ENCODE measurements at regions of chr20 and their contacts with region 1.

Region 1: GRCh38 chr20:62523473-62524203 is 47.8 kb upstream of the GATA5 start:
- DNase-seq: peak; percentile 52
- ATAC-seq: peak; percentile 88
- H3K4me3 Mint-ChIP-seq: peak overlapping the region; percentile 12; the same call in 1 of the 2 replicates
- H3K27ac Mint-ChIP-seq: no peak overlapping the region
- H3K4me1 Mint-ChIP-seq: peaks cover 11% of the 10 kb centered on the region
- H3K27me3 Mint-ChIP-seq: no peaks in the 10 kb centered on the region
- CTCF ChIP-seq: no peak

Region 2: GRCh38 chr20:62536871-62537401 is 13.3 kb after region 1 on chr20:
- CTCF ChIA-PET with region 1: interaction called, 12 read pairs
- POLR2A ChIA-PET with region 1: no interaction called
- DNase-seq: no peak
- ATAC-seq: no peak
- H3K4me3 Mint-ChIP-seq: no peak overlapping the region
- H3K27ac Mint-ChIP-seq: no peak overlapping the region
- H3K4me1 Mint-ChIP-seq: no peaks in the 10 kb centered on the region
- H3K27me3 Mint-ChIP-seq: no peaks in the 10 kb centered on the region
- CTCF ChIP-seq: no peak

Region 3: DNA sequence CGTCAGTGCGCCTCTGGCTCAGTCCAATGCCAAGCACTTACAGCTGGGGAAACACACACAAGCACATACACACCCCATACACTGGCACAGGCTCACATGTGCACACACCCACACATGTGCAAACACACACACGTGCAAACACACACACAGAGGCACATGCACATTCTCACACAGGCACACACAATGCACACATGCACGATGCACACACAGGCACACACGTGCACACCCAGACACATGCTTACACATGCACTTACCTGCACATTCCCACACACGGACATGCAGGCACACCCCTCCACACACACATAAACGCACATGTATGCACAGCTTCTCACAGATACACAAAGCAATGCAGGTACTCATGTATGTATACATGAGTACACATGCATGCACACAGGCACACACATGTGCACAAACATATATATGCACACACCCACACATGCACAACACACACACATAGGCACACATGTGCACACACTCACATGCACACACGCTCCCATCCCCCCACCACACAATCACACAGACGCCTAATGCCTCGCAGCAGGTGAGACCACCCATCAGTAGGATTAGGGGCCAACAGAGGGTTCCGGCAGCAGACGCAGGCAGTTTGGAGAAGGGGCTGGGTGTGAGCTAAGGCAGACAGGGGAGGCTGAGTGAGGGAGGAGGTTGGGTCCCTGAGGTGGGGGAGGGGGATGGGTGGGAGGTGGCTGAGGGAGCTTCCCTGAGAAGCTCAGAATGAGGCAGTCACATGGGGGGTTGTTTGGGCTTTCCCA is 47.4 kb after region 1 on chr20:
- CTCF ChIA-PET with region 1: no interaction called
- POLR2A ChIA-PET with region 1: no interaction called
- DNase-seq: no peak
- ATAC-seq: no peak
- H3K4me3 Mint-ChIP-seq: no peak overlapping the region
- H3K27ac Mint-ChIP-seq: no peak overlapping the region
- H3K4me1 Mint-ChIP-seq: 0 out of 2 replicates have a peak, but pooled peaks cover 3% of the 10 kb centered on the region
- H3K27me3 Mint-ChIP-seq: peaks cover 3% of the 10 kb centered on the region
- CTCF ChIP-seq: no peak